Activated CD4-positive, alpha-beta T cell treated with anti-CD3 and anti-CD28 coated beads for 36 hours (primary cell): ENCODE measurements at regions of chr17 and their contacts with region 1.

Region 1: GRCh38 chr17:34637548-34638525 is 58.5 kb downstream of the TMEM132E start:
- DNase-seq: peak; percentile 91
- ATAC-seq: peak; percentile 99
- H3K4me3 Mint-ChIP-seq: peak overlapping the region; percentile 56
- H3K27ac Mint-ChIP-seq: peak overlapping the region; percentile 29
- H3K4me1 Mint-ChIP-seq: peaks cover 4% of the 10 kb centered on the region
- H3K27me3 Mint-ChIP-seq: peaks cover 6% of the 10 kb centered on the region

Region 2: GRCh38 chr17:34412965-34413441 is 224.8 kb before region 1 on chr17:
- CTCF ChIA-PET with region 1: no interaction called
- POLR2A ChIA-PET with region 1: no interaction called
- intact Hi-C with region 1: no loop called
- DNase-seq: no peak
- ATAC-seq: no peak
- H3K4me3 Mint-ChIP-seq: no peak overlapping the region
- H3K27ac Mint-ChIP-seq: no peak overlapping the region
- H3K4me1 Mint-ChIP-seq: peaks cover 7% of the 10 kb centered on the region
- H3K27me3 Mint-ChIP-seq: peaks cover 26% of the 10 kb centered on the region

Region 3: DNA sequence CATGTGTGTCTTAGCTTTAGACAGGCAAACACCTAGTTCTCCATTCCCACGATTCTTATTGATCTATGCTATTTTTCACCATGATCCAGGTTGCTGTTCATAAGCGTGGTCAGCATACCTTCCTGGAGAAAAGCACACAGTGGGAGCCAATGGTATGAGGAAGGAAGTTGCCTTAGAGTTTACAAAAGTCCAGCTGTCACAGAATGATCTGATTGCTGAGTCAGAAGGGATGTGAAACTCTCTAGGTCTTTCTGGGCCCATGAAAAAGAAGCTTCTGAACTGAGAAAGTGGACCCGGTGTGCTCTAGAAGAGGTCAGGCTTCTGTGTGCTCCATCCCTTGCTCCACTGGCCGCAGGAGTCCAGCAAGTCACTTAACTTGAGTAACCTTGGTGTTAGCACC is 203.8 kb before region 1 on chr17:
- CTCF ChIA-PET with region 1: no interaction called
- POLR2A ChIA-PET with region 1: no interaction called
- intact Hi-C with region 1: loop called in 1 of 2 experiments (anchors 5 kb)
- DNase-seq: no peak
- ATAC-seq: no peak
- H3K4me3 Mint-ChIP-seq: no peak overlapping the region
- H3K27ac Mint-ChIP-seq: no peak overlapping the region
- H3K4me1 Mint-ChIP-seq: no peaks in the 10 kb centered on the region
- H3K27me3 Mint-ChIP-seq: peaks cover 2% of the 10 kb centered on the region

Region 4: GRCh38 chr17:34542700-34543336 is 95.0 kb before region 1 on chr17:
- CTCF ChIA-PET with region 1: interaction called, 25 read pairs
- POLR2A ChIA-PET with region 1: no interaction called
- intact Hi-C with region 1: loop called (anchors 1 kb)
- DNase-seq: peak; percentile 68
- ATAC-seq: peak; percentile 47
- H3K4me3 Mint-ChIP-seq: no peak overlapping the region
- H3K27ac Mint-ChIP-seq: no peak overlapping the region
- H3K4me1 Mint-ChIP-seq: no peaks in the 10 kb centered on the region
- H3K27me3 Mint-ChIP-seq: peaks cover 22% of the 10 kb centered on the region

Region 5: GRCh38 chr17:34584805-34585416 is 52.9 kb before region 1 on chr17:
- CTCF ChIA-PET with region 1: interaction called, 4 read pairs
- POLR2A ChIA-PET with region 1: no interaction called
- intact Hi-C with region 1: loop called in 1 of 2 experiments (anchors 1 kb)
- DNase-seq: no peak
- ATAC-seq: peak; percentile 36
- H3K4me3 Mint-ChIP-seq: no peak overlapping the region
- H3K27ac Mint-ChIP-seq: no peak overlapping the region
- H3K4me1 Mint-ChIP-seq: peaks cover 4% of the 10 kb centered on the region
- H3K27me3 Mint-ChIP-seq: peaks cover 45% of the 10 kb centered on the region